Activated B cell treated with CpG ODN at 0.5 μM for 24 hours (primary cell): ENCODE measurements at regions of chr14 and their contacts with region 1.

Region 1: DNA sequence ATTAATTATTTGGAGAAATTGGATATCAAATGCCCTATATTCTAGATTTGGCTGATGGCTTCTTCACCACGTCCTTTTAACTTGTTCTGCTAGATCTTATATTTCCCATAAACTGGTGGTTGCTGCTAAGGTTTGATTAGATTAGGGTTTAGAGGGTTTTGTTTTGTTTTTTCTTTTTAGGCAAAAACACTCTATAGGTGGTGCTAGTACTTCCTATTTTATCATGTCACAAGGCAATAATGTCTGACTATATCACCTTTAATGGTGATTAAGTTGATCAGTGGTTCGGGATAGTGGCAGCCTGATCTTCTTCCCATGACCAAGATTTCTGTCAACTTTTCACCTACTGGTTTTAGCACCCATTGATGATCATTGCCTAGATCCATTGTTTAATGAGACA is 455.1 kb downstream of the RAD51B start:
- DNase-seq: no peak
- ATAC-seq: no peak
- H3K4me3 Mint-ChIP-seq: peak overlapping the region; percentile 65
- H3K27ac Mint-ChIP-seq: peak overlapping the region; percentile 99
- H3K4me1 Mint-ChIP-seq: peaks cover 93% of the 10 kb centered on the region
- H3K27me3 Mint-ChIP-seq: no peaks in the 10 kb centered on the region
- CTCF ChIP-seq: no peak

Region 2: DNA sequence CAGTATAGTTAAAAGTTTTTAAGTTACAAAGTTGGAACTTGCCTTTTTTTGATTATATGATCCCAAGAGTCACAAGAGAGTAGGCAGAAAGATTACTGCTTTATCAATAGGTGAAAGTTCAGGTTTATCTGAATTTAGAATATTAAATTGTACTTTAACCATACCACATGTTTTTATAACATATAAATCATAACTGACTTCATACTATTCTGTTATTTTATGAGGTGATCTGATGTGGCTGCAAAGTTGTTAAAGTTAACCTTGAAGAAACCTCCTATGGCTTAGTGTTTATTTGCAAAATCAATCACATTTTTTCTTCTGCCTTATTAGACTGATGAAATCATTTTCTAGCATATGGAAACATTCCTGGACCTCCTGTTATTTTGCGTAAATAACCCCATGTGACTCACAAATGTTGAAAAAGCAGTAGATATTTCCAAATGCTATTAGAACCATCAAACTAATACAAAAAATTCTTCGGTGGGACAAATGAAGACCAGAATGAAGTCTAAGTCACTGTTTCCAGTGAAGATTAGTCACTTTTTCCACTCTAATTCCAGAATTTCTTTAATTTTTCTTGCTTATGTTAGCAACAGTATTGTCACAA is 323.1 kb before region 1 on chr14:
- CTCF ChIA-PET with region 1: no interaction called
- POLR2A ChIA-PET with region 1: no interaction called
- intact Hi-C with region 1: no loop called
- DNase-seq: no peak
- ATAC-seq: no peak
- H3K4me3 Mint-ChIP-seq: no peak overlapping the region
- H3K27ac Mint-ChIP-seq: no peak overlapping the region
- H3K4me1 Mint-ChIP-seq: no peaks in the 10 kb centered on the region
- H3K27me3 Mint-ChIP-seq: no peaks in the 10 kb centered on the region
- CTCF ChIP-seq: no peak

Region 3: GRCh38 chr14:68199554-68200151 is 75.1 kb before region 1 on chr14:
- CTCF ChIA-PET with region 1: no interaction called
- POLR2A ChIA-PET with region 1: no interaction called
- intact Hi-C with region 1: no loop called
- DNase-seq: no peak
- ATAC-seq: no peak
- H3K4me3 Mint-ChIP-seq: no peak overlapping the region
- H3K27ac Mint-ChIP-seq: no peak overlapping the region
- H3K4me1 Mint-ChIP-seq: peaks cover 9% of the 10 kb centered on the region
- H3K27me3 Mint-ChIP-seq: no peaks in the 10 kb centered on the region
- CTCF ChIP-seq: no peak

Region 4: GRCh38 chr14:68292441-68293215 is 17.9 kb after region 1 on chr14:
- CTCF ChIA-PET with region 1: interaction called, 4 read pairs
- POLR2A ChIA-PET with region 1: interaction called, 375 read pairs
- intact Hi-C with region 1: no loop called
- DNase-seq: no peak
- ATAC-seq: peak; percentile 35
- H3K4me3 Mint-ChIP-seq: peak overlapping the region; percentile 59
- H3K27ac Mint-ChIP-seq: peak overlapping the region; percentile 96
- H3K4me1 Mint-ChIP-seq: peaks cover 77% of the 10 kb centered on the region
- H3K27me3 Mint-ChIP-seq: no peaks in the 10 kb centered on the region
- CTCF ChIP-seq: no peak

Region 5: DNA sequence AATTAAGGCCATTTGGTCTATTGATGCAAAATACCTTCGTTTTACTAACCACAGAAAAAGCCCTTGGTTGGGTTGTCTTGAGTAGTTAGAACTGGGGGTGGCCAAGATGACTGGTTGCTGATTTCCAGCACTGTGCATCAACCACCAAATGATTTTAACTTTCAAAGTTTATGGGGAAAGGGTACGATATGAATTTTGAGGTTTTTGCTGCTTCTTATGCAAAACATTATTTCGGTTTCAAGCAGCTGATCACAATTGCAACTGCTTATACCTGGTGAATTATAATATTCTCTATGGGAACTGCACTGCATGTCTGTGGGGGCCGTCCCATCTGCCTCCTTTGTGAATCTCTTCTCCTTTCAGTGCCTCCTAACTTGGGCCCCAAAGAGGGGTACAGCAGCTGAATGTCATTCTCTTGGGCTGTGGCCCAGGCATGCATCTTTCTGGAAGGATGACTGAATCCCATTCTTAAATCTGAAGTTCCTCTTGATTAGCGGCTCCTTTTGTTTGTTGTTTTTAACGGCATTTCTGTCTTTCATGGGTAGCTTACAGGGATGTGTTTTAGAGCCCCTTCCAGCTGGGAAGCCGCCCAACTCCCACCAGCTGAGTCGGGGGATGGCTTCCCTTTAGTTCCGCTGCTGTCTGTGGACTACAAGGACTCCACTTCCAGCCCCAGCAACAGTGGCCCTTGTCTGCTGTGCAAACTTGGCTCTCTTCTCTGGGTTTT is 38.3 kb after region 1 on chr14:
- CTCF ChIA-PET with region 1: no interaction called
- POLR2A ChIA-PET with region 1: interaction called, 251 read pairs
- intact Hi-C with region 1: no loop called
- DNase-seq: no peak
- ATAC-seq: peak; percentile 84
- H3K4me3 Mint-ChIP-seq: peak overlapping the region; percentile 62
- H3K27ac Mint-ChIP-seq: peak overlapping the region; percentile 94
- H3K4me1 Mint-ChIP-seq: peaks cover 91% of the 10 kb centered on the region
- H3K27me3 Mint-ChIP-seq: no peaks in the 10 kb centered on the region
- CTCF ChIP-seq: no peak

Region 6: GRCh38 chr14:68377459-68377858 is 102.7 kb after region 1 on chr14:
- CTCF ChIA-PET with region 1: interaction called, 3 read pairs
- POLR2A ChIA-PET with region 1: interaction called, 12 read pairs
- intact Hi-C with region 1: no loop called
- DNase-seq: no peak
- ATAC-seq: peak; percentile 43
- H3K4me3 Mint-ChIP-seq: peak overlapping the region; percentile 50
- H3K27ac Mint-ChIP-seq: peak overlapping the region; percentile 83
- H3K4me1 Mint-ChIP-seq: peaks cover 69% of the 10 kb centered on the region
- H3K27me3 Mint-ChIP-seq: no peaks in the 10 kb centered on the region
- CTCF ChIP-seq: no peak

Region 7: GRCh38 chr14:68495101-68496039 is 220.6 kb after region 1 on chr14:
- CTCF ChIA-PET with region 1: no interaction called
- POLR2A ChIA-PET with region 1: interaction called, 11 read pairs
- intact Hi-C with region 1: no loop called
- DNase-seq: no peak
- ATAC-seq: peak; percentile 92
- H3K4me3 Mint-ChIP-seq: peak overlapping the region; percentile 64
- H3K27ac Mint-ChIP-seq: peak overlapping the region; percentile 98
- H3K4me1 Mint-ChIP-seq: peaks cover 84% of the 10 kb centered on the region
- H3K27me3 Mint-ChIP-seq: no peaks in the 10 kb centered on the region
- CTCF ChIP-seq: no peak

Region 8: GRCh38 chr14:68655911-68656360 is 381.2 kb after region 1 on chr14:
- CTCF ChIA-PET with region 1: no interaction called
- POLR2A ChIA-PET with region 1: no interaction called
- intact Hi-C with region 1: no loop called
- DNase-seq: no peak
- ATAC-seq: no peak
- H3K4me3 Mint-ChIP-seq: no peak overlapping the region
- H3K27ac Mint-ChIP-seq: no peak overlapping the region
- H3K4me1 Mint-ChIP-seq: peaks cover 19% of the 10 kb centered on the region
- H3K27me3 Mint-ChIP-seq: no peaks in the 10 kb centered on the region
- CTCF ChIP-seq: no peak